AG04449 (cell line): ENCODE measurements at regions of chr19 and their contacts with region 1.

Region 1: DNA sequence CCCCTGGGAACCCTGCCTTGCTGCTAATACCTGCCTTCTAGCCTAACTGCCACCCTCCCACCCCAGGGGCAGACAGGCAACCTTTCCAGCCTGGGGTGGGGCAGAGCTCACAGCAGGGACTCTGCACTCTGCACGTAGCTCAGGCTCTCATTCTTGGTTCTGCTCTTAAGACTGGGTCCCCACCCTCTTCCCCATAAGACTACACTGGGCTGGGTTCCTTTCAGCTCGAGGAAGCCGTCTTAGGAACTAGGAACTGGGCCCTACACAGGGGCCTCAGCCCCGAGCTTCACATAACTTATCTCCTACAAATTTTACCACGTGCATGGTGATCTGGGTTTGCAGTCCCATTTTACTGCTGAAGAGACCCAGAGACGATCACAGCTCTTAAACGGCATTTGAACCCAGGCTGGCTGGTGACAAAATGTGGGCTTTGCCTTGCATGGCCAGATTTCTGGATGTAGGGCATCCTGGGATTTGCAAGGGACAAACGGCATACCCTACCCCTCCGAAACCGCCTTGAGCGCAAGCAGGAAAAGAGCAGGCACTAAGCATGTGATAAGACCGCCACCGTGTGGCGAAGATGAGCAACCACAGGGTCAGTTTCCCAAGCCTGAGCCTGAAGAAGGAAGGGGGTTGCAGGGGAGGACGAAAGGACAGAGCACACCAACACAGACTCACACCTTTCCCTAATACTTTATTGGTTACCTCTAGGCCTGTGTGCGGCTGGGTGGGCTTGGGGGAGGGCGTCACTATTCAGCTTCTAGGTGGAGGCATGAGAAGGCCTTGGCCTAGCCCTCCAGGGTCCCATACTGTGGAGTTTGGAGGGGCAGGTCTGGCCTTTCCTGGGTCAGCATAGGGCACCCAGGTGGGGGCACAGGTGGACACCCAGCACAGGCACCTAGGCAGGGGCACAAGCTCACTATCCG is 5.1 kb downstream of the JUNB start:
- DNase-seq: no peak
- H3K4me3 ChIP-seq: no peak overlapping the region
- CTCF ChIP-seq: peak; percentile 92

Region 2: GRCh38 chr19:12628040-12629022 is 168.1 kb before region 1 on chr19:
- CTCF ChIA-PET with region 1: no interaction called
- POLR2A ChIA-PET with region 1: no interaction called
- DNase-seq: no peak
- H3K4me3 ChIP-seq: no peak overlapping the region
- CTCF ChIP-seq: no peak

Region 3: DNA sequence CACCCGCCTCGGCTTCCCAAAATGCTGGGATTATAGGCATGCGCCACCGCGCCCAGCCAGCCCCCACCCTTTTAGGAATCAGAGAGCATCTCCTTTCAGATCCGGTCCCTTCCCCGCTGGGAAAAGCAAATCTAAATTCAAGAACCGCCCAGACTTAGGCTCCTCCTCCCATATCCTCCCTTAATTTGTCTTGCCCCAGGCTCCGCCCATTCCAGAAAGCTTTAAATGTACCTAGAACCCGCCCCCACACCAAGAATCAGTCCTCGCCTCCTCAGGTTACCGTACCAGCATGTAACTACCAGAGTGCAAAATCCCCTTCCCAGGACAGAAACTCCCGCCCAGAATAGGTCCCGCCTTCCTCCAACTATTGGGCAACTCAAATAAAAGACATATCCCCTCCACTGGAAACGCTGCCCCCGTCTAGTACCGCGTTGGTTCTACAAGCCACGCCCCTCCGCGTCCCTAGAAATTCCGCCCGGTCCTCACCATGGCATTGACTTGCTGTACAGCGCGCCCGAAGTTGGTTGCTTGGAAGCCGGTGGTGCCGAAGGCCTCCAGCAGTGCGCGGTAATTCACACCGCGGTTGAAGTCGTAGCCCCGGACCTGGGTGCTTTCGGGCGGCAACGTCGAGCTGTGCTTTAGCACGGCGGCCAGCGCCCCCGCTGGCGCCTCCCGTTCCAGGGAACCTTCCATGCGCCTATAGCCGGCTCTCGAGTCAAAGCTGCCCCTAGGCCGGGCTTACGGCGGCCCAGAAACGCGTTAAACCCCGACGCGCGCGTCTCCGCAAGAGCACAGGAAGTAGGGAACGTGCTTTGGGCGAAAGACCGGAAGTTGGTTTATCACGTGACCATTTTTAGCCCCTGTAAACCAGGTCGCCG is 115.1 kb before region 1 on chr19 and contains the start of gene DHPS:
- CTCF ChIA-PET with region 1: interaction called, 46 read pairs
- POLR2A ChIA-PET with region 1: no interaction called
- DNase-seq: peak; percentile 89
- H3K4me3 ChIP-seq: peak within 1 kb of the TSS; percentile 98
- CTCF ChIP-seq: no peak

Region 4: GRCh38 chr19:12722566-12723380 is 73.6 kb before region 1 on chr19:
- CTCF ChIA-PET with region 1: interaction called, 24 read pairs
- POLR2A ChIA-PET with region 1: interaction called, 33 read pairs
- DNase-seq: peak; percentile 95
- H3K4me3 ChIP-seq: peak overlapping the region; percentile 80
- CTCF ChIP-seq: no peak

Region 5: DNA sequence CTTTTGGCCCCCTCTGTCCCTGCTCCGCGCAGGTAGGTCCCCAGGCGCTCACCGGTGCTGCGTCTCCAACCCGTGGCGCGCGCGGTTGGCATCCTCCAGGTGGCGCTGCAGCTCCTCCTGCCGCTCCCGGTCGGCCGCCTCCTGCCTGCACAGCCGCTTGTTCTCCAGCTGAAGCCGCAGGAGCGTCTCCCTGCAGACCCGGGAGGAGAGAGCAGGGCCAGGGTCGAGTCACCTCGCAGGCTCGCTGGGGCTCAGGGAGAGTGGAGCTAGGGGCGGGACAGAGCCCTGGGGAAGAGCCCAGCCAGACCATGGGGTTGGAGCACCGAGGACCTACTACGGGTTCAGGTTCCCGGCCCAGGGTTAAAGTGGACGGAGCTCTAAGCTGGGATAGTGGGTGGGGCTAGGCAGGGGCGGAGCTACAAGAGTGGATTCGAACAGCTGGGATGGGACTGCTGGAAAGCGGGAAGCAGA is 30.3 kb before region 1 on chr19:
- CTCF ChIA-PET with region 1: interaction called, 1,565 read pairs
- POLR2A ChIA-PET with region 1: interaction called, 51 read pairs
- DNase-seq: no peak
- H3K4me3 ChIP-seq: peak overlapping the region; percentile 68
- CTCF ChIP-seq: peak; percentile 99

Region 6: GRCh38 chr19:12806239-12807081 is 10.1 kb after region 1 on chr19 and contains the start of gene RNASEH2A:
- CTCF ChIA-PET with region 1: interaction called, 34 read pairs
- POLR2A ChIA-PET with region 1: interaction called, 10 read pairs
- DNase-seq: no peak
- H3K4me3 ChIP-seq: peak within 1 kb of the TSS; percentile 87
- CTCF ChIP-seq: no peak